ENCODE measurements at regions of chr3 and their contacts with region 1.

Region 1: GRCh38 chr3:149860881-149861280 is 47.9 kb downstream of the RNF13 start:
- DNase-seq: no peak
- H3K4me3 ChIP-seq: no peak overlapping the region
- H3K27ac ChIP-seq: no peak overlapping the region
- H3K27me3 ChIP-seq: no peaks in the 10 kb centered on the region
- CTCF ChIP-seq: no peak

Region 2: GRCh38 chr3:149839896-149840295 is 21.0 kb before region 1 on chr3:
- CTCF ChIA-PET with region 1: no interaction called
- POLR2A ChIA-PET with region 1: no interaction called
- DNase-seq: no peak
- H3K4me3 ChIP-seq: no peak overlapping the region
- H3K27ac ChIP-seq: no peak overlapping the region
- H3K27me3 ChIP-seq: no peaks in the 10 kb centered on the region
- CTCF ChIP-seq: no peak

Region 3: DNA sequence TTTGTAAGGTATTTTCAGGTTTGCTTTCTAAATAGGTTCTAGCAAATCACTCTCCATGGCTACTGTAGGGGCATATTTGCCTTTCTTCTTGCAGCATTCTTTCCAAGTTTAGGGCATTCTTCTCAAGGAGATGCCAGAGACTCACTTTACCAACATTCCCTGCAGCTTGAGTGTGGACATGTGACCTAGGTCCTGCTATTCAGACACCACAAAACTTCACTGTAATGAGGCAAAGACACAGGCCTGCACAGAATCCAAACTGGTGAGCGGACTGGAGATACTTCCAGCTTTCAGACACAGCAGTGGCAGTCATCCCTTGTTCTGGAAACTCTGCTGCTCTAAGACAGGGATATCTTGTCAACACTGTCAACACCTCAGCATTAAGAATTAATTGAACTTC is 256.2 kb after region 1 on chr3:
- CTCF ChIA-PET with region 1: no interaction called
- POLR2A ChIA-PET with region 1: interaction called, 13 read pairs
- DNase-seq: no peak
- H3K4me3 ChIP-seq: no peak overlapping the region
- H3K27ac ChIP-seq: no peak overlapping the region
- H3K27me3 ChIP-seq: no peaks in the 10 kb centered on the region
- CTCF ChIP-seq: no peak